Activated T-helper 1 cell treated with anti-CD3 and anti-CD28 coated beads, Interleukin-12 subunit alpha, Interleukin-12 subunit beta, Interleukin-2, Interleukin-4 antibody, amounts not matched to agents 30 ng/mL and 10 ng/mL and 1 ng/mL, durations not matched to agents 14 hours and 24 hours and 36 hours (primary cell): ENCODE measurements at regions of chr2 and their contacts with region 1.

Region 1: DNA sequence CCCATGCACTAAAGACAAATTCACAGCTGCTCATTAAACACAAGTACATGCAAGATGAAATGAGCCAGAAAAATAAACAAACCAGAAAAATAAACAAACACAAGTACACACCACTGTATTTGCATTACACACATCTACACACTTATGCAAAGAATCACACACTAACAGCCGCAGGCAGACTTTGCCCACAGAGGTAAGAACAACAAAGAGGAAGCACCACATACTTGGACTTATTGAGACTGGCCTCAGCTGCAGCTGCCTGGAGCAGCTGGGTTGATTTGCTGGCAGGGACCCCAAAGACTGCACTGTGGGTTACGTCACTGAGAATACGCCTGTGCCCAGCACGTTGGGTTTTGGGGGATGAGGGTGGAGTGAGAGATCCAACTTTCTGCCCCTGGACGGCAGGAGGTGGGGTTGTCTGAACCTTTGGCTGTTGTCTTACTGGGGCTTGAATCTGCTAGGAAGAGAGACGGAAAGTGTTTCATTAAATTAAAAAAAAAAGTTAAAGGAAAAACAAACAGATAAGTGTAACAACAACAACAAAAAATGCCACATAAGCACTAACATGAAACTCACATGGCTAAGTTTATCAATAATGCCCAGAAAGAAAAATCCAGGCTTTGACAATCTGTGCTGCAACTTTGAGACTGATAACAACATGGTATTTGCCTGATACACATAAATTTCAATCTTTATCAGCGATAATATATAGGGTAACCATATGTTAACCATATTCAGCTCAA is 71.9 kb upstream of the NFU1 start:
- DNase-seq: no peak
- H3K4me3 Mint-ChIP-seq: no peak overlapping the region
- H3K27ac Mint-ChIP-seq: peak overlapping the region; percentile 83
- H3K4me1 Mint-ChIP-seq: peaks cover 37% of the 10 kb centered on the region
- H3K27me3 Mint-ChIP-seq: no peaks in the 10 kb centered on the region

Region 2: DNA sequence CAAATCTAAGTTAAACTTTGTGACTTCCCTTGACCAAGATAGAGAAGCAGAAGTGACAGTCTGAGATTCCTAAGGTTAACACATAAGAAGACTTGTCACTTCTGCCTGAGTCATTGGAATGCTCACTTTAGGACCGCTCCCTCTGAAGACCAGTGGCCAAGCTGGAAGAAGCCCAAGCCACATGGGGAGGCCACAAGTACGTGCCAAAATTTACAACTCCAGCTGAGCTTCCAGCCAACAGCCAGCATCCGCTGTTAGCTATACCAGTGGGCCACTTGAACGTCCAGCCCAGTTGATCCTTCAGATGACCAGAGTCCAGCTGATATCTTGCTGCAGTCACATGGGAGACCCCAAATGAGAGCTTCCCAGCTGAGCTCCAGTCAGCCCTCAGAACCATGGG is 514.3 kb before region 1 on chr2:
- intact Hi-C with region 1: no loop called
- DNase-seq: no peak
- H3K4me3 Mint-ChIP-seq: no peak overlapping the region
- H3K27ac Mint-ChIP-seq: no peak overlapping the region
- H3K4me1 Mint-ChIP-seq: no peaks in the 10 kb centered on the region
- H3K27me3 Mint-ChIP-seq: peaks cover 9% of the 10 kb centered on the region

Region 3: GRCh38 chr2:69386789-69387734 is 122.1 kb before region 1 on chr2 and contains the start of gene GFPT1:
- intact Hi-C with region 1: loop called (anchors 5 kb)
- DNase-seq: peak; percentile 93
- H3K4me3 Mint-ChIP-seq: peak within 1 kb of the TSS; percentile 87
- H3K27ac Mint-ChIP-seq: peak within 1 kb of the TSS; percentile 81
- H3K4me1 Mint-ChIP-seq: peaks cover 46% of the 10 kb centered on the region
- H3K27me3 Mint-ChIP-seq: no peaks in the 10 kb centered on the region
- total RNA-seq, gene GFPT1: 47.3 and 52.3 TPM in 2 replicates

Region 4: DNA sequence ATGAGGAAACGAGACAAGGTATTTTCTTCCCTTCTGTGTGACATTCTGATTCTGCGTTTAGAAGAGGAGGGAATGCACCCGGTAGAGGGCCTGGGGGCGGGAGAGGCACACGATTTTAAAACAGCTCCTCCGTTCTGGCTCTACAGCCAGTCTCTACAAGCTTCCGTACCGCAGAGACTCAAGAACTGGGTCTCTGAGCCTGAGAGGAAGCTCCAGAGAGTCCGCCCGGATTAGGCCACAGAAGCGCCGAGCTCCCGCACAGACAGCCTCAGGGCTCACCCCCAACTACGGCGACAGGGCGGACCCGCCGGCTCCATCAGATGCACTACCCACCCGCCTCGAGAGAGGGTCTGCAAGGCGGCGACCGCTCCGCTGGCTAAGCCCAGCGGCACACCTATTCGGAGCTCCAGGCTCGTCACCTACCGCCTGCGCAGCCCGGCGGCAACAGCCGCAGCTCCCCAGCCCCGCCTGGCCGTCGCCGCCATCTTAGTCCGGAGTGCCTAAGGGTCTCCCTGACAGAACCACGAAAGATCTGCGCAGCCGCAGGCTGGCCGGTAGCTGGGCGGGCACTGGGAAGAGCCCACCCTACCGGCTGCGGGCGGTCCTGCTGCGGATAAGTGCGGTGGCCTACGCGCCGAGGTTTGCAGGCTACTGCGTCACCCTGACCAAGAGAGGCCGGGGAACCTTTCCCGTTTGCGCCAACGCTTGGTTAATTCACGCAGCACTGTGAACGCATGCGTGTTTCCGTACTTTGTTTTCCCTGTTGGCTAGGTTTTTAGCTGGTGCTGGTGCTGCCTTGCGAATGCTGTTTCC is 72.0 kb before region 1 on chr2 and contains the start of gene NFU1:
- intact Hi-C with region 1: loop called (anchors 1 kb)
- DNase-seq: peak; percentile 79
- H3K4me3 Mint-ChIP-seq: peak within 1 kb of the TSS; percentile 93
- H3K27ac Mint-ChIP-seq: peak within 1 kb of the TSS; percentile 99
- H3K4me1 Mint-ChIP-seq: peaks cover 17% of the 10 kb centered on the region
- H3K27me3 Mint-ChIP-seq: no peaks in the 10 kb centered on the region
- total RNA-seq, gene NFU1: 29.3 and 29.8 TPM in 2 replicates

Region 5: DNA sequence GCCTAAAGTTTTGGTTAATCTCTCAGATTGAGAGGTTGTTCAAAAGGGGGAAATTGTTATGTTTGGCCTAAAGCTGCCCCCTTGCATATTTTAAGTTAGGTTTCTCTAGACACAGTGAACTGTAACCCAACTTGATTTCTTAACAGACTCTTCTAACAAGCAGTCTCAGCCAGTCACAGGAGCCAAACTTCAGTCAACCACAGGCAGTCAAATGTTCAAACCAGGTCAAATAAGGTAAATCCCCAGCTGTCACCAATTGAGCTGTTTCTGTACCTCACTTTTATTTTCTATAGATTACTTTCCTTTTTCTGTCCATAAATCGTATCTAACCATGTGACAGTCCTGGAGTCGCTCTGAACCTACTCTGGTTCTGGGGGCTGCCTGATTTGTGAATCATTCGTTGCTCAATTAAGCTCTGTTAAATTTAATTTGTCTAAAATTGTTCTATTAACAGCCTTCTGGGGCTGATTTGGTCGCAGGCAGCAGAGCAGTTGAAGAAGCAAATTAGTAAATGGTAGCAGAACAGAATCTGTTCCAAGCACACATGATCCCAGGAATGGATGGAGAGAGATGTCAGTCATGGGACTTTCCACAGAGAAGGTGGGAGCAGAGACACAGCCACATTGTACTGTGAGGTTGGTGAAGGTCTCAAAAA is 55.6 kb before region 1 on chr2:
- intact Hi-C with region 1: loop called (anchors 5 kb)
- DNase-seq: no peak
- H3K4me3 Mint-ChIP-seq: no peak overlapping the region
- H3K27ac Mint-ChIP-seq: no peak overlapping the region
- H3K4me1 Mint-ChIP-seq: peaks cover 17% of the 10 kb centered on the region
- H3K27me3 Mint-ChIP-seq: peaks cover 12% of the 10 kb centered on the region

Region 6: GRCh38 chr2:69465513-69466456 is 43.4 kb before region 1 on chr2:
- intact Hi-C with region 1: loop called (anchors 2 kb)
- DNase-seq: no peak
- H3K4me3 Mint-ChIP-seq: no peak overlapping the region
- H3K27ac Mint-ChIP-seq: no peak overlapping the region
- H3K4me1 Mint-ChIP-seq: peaks cover 10% of the 10 kb centered on the region
- H3K27me3 Mint-ChIP-seq: no peaks in the 10 kb centered on the region

Region 7: GRCh38 chr2:69490486-69490885 is 18.7 kb before region 1 on chr2:
- intact Hi-C with region 1: loop called (anchors 1 kb)
- DNase-seq: peak; percentile 5
- H3K4me3 Mint-ChIP-seq: no peak overlapping the region
- H3K27ac Mint-ChIP-seq: peak overlapping the region; percentile 67
- H3K4me1 Mint-ChIP-seq: peaks cover 36% of the 10 kb centered on the region
- H3K27me3 Mint-ChIP-seq: no peaks in the 10 kb centered on the region

Region 8: DNA sequence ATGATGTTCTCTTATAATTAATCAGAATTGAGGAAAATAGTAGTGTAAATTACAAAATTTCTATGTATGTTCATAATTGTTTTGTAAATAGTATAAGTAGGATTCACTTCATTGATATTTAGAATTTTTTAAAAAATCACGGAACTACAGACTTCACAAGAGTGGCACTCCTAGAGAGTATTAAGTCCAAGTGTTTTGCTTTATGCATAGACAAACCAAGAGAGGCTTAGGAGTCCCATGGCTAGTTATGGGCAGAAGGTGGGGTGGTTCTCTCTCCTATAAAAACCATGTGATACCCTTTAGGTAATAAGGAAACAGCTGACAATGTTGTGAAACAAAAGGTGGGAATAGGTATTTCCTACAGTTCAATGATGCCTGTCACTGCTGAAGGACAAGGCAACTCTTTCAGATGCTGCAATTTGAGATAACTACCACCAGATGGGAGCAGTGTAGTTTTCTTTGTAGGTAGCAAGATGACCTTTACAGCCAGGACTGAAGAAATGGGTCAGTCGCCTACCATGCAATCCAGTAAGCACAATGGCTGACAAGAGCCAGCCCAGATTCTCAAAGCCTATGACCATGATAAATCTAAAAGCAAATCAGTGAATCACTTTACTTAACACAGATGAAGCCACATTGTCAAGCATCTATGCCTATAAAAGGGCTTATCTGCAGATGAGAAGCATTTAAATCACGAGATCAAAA is 50.4 kb after region 1 on chr2:
- intact Hi-C with region 1: loop called (anchors 5 kb)
- DNase-seq: no peak
- H3K4me3 Mint-ChIP-seq: no peak overlapping the region
- H3K27ac Mint-ChIP-seq: peak overlapping the region; percentile 59
- H3K4me1 Mint-ChIP-seq: peaks cover 52% of the 10 kb centered on the region
- H3K27me3 Mint-ChIP-seq: no peaks in the 10 kb centered on the region